Endothelial cell of umbilical vein (primary cell): ENCODE measurements at regions of chr9 and their contacts with region 1.

Region 1: GRCh38 chr9:9942764-9943424 is 669.9 kb downstream of the PTPRD start:
- DNase-seq: peak; percentile 87
- H3K4me3 ChIP-seq: no peak overlapping the region
- H3K27ac ChIP-seq: no peak overlapping the region
- H3K4me1 ChIP-seq: no peaks in the 10 kb centered on the region
- H3K27me3 ChIP-seq: no peaks in the 10 kb centered on the region
- CTCF ChIP-seq: peak; percentile 87 to 90
- POLR2A ChIP-seq: no peak

Region 2: DNA sequence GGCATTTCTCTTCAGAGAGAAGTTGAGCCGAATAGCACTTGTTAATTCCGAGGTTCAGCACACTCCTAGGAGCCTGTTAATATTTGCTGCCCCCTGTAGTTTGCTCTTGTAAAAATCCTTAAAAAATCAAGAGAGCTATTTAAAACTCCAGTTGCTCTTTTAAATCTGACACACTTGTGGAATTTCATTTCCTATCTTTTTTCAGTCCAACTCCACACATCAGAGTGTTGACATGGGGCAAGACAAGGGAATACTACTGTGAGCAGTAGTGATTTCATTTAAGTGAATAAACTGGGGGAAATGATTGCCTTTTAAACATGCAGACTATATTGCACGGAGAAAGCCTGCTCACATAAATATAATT is 1047.1 kb before region 1 on chr9:
- CTCF ChIA-PET with region 1: interaction called, 11 read pairs
- POLR2A ChIA-PET with region 1: no interaction called
- dilution Hi-C with region 1: no loop called
- intact Hi-C with region 1: no loop called
- DNase-seq: peak; percentile 47
- H3K4me3 ChIP-seq: no peak overlapping the region
- H3K27ac ChIP-seq: no peak overlapping the region
- H3K4me1 ChIP-seq: no peaks in the 10 kb centered on the region
- H3K27me3 ChIP-seq: no peaks in the 10 kb centered on the region
- CTCF ChIP-seq: peak; percentile 14 to 26
- POLR2A ChIP-seq: no peak

Region 3: GRCh38 chr9:9552665-9553064 is 390.2 kb before region 1 on chr9:
- CTCF ChIA-PET with region 1: no interaction called
- POLR2A ChIA-PET with region 1: no interaction called
- dilution Hi-C with region 1: no loop called
- intact Hi-C with region 1: no loop called
- DNase-seq: no peak
- H3K4me3 ChIP-seq: no peak overlapping the region
- H3K27ac ChIP-seq: no peak overlapping the region
- H3K4me1 ChIP-seq: no peaks in the 10 kb centered on the region
- H3K27me3 ChIP-seq: no peaks in the 10 kb centered on the region
- CTCF ChIP-seq: no peak
- POLR2A ChIP-seq: no peak

Region 4: GRCh38 chr9:9799287-9799686 is 143.6 kb before region 1 on chr9:
- CTCF ChIA-PET with region 1: interaction called, 131 read pairs
- POLR2A ChIA-PET with region 1: no interaction called
- dilution Hi-C with region 1: no loop called
- intact Hi-C with region 1: no loop called
- DNase-seq: no peak
- H3K4me3 ChIP-seq: no peak overlapping the region
- H3K27ac ChIP-seq: no peak overlapping the region
- H3K4me1 ChIP-seq: no peaks in the 10 kb centered on the region
- H3K27me3 ChIP-seq: peaks cover 0 to 2% of the 10 kb centered on the region in 2 experiments
- CTCF ChIP-seq: no peak
- POLR2A ChIP-seq: no peak

Region 5: GRCh38 chr9:9904041-9904440 is 38.9 kb before region 1 on chr9:
- CTCF ChIA-PET with region 1: interaction called, 18 read pairs
- POLR2A ChIA-PET with region 1: no interaction called
- dilution Hi-C with region 1: no loop called
- intact Hi-C with region 1: no loop called
- DNase-seq: no peak
- H3K4me3 ChIP-seq: no peak overlapping the region
- H3K27ac ChIP-seq: no peak overlapping the region
- H3K4me1 ChIP-seq: no peaks in the 10 kb centered on the region
- H3K27me3 ChIP-seq: no peaks in the 10 kb centered on the region
- CTCF ChIP-seq: no peak
- POLR2A ChIP-seq: no peak

Region 6: GRCh38 chr9:9920425-9921060 is 22.4 kb before region 1 on chr9:
- CTCF ChIA-PET with region 1: interaction called, 73 read pairs
- POLR2A ChIA-PET with region 1: no interaction called
- dilution Hi-C with region 1: no loop called
- intact Hi-C with region 1: no loop called
- DNase-seq: no peak
- H3K4me3 ChIP-seq: no peak overlapping the region
- H3K27ac ChIP-seq: no peak overlapping the region
- H3K4me1 ChIP-seq: no peaks in the 10 kb centered on the region
- H3K27me3 ChIP-seq: no peaks in the 10 kb centered on the region
- CTCF ChIP-seq: no peak
- POLR2A ChIP-seq: no peak

Region 7: DNA sequence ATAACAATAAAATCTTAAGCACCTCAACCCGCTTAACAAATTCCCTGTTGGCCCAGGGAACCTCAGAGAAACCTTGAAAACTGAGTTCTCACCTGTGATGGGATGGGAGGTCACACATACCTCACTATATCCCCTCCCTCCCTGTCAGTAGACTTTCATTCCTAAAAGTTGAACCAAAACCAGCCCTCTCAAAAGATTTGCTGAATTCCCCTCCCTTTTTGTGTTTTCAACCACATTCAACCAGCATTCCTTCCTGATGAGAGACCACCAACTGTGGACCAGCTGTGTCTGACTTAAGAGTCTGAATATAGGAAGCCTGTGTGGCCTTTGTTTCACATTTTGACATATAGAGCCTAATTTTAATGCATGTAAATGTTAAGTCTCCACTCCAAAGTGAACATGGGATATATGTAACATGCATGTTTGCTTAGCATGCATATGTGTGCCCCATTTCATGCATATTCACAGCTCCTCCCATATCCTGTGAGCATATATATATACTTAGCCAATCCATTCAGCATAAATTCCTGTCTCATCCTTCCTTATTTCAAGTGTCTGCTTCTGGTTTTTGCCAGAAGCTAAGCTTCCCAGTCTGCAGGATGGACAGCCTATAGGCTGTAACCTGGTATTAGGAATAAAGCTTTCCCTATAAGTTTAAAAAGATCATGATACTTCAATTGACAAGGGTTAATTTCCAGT is 65.4 kb after region 1 on chr9:
- CTCF ChIA-PET with region 1: interaction called, 10 read pairs
- POLR2A ChIA-PET with region 1: no interaction called
- dilution Hi-C with region 1: no loop called
- intact Hi-C with region 1: no loop called
- DNase-seq: no peak
- H3K4me3 ChIP-seq: no peak overlapping the region
- H3K27ac ChIP-seq: no peak overlapping the region
- H3K4me1 ChIP-seq: peaks cover 11% of the 10 kb centered on the region
- H3K27me3 ChIP-seq: no peaks in the 10 kb centered on the region
- CTCF ChIP-seq: no peak
- POLR2A ChIP-seq: no peak

Region 8: GRCh38 chr9:10274988-10275387 is 332.1 kb after region 1 on chr9:
- CTCF ChIA-PET with region 1: no interaction called
- POLR2A ChIA-PET with region 1: no interaction called
- dilution Hi-C with region 1: no loop called
- intact Hi-C with region 1: no loop called
- DNase-seq: peak; percentile 35
- H3K4me3 ChIP-seq: no peak overlapping the region
- H3K27ac ChIP-seq: no peak overlapping the region
- H3K4me1 ChIP-seq: no peaks in the 10 kb centered on the region
- H3K27me3 ChIP-seq: no peaks in the 10 kb centered on the region
- CTCF ChIP-seq: peak; percentile 7 to 19
- POLR2A ChIP-seq: no peak